CD4-positive, alpha-beta T cell (primary cell): ENCODE measurements at regions of chr14 and their contacts with region 1.

Region 1: DNA sequence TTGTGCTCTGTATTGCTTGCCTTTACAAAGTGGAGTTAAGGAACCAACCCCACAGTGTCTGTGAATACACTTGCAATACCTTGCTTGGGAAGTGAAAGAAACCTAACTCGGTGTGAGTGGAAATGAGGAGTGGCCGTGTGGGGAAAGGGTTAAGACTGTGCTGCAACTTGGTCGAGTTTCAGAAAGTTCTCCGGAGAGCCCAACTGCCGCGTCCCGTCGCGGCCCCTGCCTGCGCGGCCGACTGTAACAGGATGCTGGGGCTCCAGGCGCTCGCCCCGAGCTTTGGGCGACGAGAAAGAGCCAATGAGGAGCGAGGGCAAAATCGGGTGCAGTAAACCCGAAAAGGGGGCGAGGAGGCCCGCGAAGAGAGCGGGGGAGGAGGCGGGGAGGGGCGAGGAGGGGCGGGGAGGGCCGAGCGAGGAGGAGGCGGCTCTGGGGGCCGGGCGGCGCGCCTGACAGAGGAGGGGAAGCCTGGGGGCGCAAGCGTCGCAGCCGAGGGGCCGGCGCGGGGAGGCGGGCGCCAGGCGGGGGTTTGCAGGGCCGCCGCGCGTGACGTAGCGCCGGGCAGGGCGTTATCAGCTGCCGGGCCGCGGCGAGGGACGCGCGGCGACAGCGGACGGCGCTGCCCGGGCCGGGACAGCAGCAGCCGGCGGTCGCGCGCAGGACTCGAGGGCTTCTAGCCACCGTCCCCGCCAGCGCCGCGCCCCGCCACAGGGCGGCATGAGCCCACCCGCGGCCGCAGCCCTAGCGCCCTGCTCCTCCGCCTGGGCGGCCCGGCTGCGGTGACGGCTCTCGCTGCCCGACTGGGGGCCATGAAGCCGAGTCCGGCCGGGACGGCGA is at the start of gene DACT1:
- DNase-seq: peak; percentile 17 to 80 (median 48)
- ATAC-seq: peak; percentile 67
- H3K4me3 ChIP-seq: peak within 1 kb of the TSS; percentile 55
- H3K4me3 Mint-ChIP-seq: peak within 1 kb of the TSS; percentile 93
- H3K27ac ChIP-seq: peak within 1 kb of the TSS in 1 of 2 donors; percentile 31
- H3K27ac Mint-ChIP-seq: peak within 1 kb of the TSS; percentile 40
- H3K4me1 ChIP-seq: peaks cover 18% of the 10 kb centered on the region
- H3K4me1 Mint-ChIP-seq: peaks cover 35% of the 10 kb centered on the region
- H3K27me3 ChIP-seq: peaks cover 0 to 15% of the 10 kb centered on the region in 2 experiments
- H3K27me3 Mint-ChIP-seq: peaks cover 34% of the 10 kb centered on the region
- CTCF ChIP-seq: no peak
- total RNA-seq, gene DACT1: 1.3 TPM

Region 2: DNA sequence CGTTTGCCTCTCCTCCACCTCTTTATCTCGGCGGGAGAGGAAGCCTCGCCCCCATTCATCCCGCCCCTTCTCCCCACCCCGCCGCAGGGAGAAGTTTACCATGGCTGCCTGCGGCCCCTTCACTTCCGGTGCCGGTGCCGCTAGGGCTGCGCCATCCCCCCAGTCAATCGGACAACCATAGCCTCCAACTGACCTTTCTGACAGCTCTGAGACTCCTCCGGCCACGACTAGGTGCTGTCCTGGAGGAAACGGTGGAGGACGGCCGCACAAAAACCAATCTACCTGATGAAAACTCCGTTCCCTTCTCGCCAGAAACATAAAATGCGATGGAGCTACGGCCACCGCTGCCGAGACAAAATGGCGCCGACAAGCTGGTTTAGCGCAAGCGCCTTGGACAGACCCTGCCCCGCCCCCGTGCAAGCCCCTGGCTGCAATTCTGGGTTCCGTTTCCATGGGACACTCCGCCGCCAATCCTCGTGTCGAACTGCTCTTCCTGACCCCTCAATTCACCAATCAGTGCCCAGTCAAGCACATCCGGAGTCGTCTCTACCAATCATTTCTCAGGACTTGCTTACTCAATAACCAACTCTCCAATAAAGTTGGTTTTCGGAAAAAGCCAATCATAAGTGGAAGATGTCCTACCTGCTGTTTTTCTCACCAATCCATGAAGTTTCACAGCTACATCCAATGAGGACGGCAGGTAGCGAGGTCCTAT is 339.7 kb before region 1 on chr14:
- CTCF ChIA-PET with region 1: no interaction called
- POLR2A ChIA-PET with region 1: no interaction called
- intact Hi-C with region 1: no loop called
- DNase-seq: peak; percentile 94 to 100 (median 98)
- ATAC-seq: peak; percentile 83
- H3K4me3 ChIP-seq: peak overlapping the region; percentile 85
- H3K4me3 Mint-ChIP-seq: no peak overlapping the region
- H3K27ac ChIP-seq: peak overlapping the region; percentile 95 to 98
- H3K27ac Mint-ChIP-seq: no peak overlapping the region
- H3K4me1 ChIP-seq: peaks cover 30% of the 10 kb centered on the region
- H3K4me1 Mint-ChIP-seq: peaks cover 32% of the 10 kb centered on the region
- H3K27me3 ChIP-seq: no peaks in the 10 kb centered on the region
- H3K27me3 Mint-ChIP-seq: no peaks in the 10 kb centered on the region
- CTCF ChIP-seq: no peak

Region 3: GRCh38 chr14:58501214-58501816 is 136.3 kb before region 1 on chr14:
- CTCF ChIA-PET with region 1: no interaction called
- POLR2A ChIA-PET with region 1: interaction called, 3 read pairs
- intact Hi-C with region 1: loop called (anchors 2 to 5 kb)
- DNase-seq: peak in 5 of 14 experiments; percentile 21 to 70 (median 46)
- ATAC-seq: peak; percentile 71
- H3K4me3 ChIP-seq: no peak overlapping the region
- H3K4me3 Mint-ChIP-seq: no peak overlapping the region
- H3K27ac ChIP-seq: no peak overlapping the region
- H3K27ac Mint-ChIP-seq: no peak overlapping the region
- H3K4me1 ChIP-seq: no peaks in the 10 kb centered on the region
- H3K4me1 Mint-ChIP-seq: no peaks in the 10 kb centered on the region
- H3K27me3 ChIP-seq: no peaks in the 10 kb centered on the region
- H3K27me3 Mint-ChIP-seq: no peaks in the 10 kb centered on the region
- CTCF ChIP-seq: peak; percentile 82

Region 4: DNA sequence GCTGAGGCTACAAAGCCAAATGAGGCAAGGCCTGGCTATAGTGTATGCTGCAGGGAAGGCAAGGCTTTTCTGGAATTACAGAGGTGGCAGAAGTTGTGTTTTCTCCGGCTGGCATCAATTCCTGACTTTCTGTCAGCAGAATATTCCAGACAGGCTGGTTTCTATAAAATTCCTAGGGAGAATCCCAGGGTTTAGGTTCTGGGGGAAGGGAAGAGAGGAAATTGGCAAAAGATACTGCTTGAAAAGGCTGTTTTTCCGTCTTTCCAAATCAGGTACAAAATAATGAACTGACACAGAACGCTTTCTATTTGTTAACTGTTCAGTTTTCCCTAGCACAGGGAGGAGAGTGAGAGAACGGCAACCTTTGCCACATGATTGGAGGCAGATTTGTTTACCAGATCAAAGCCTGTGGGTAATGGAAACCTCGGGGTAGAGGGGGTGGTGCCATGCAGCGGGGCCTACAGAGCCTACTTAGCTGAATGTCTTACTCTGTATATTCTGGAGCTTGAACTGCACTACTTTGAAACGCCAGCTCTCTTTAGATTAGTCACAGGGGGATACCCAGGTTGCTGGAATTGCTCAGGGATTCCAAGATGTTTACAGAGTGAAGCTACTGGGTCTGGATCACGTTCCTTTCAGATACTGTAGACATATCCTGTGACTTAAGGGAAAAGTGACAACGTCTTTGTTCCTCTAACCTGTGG is 65.7 kb before region 1 on chr14:
- CTCF ChIA-PET with region 1: interaction called, 3 read pairs
- POLR2A ChIA-PET with region 1: interaction called, 13 read pairs
- intact Hi-C with region 1: no loop called
- DNase-seq: peak in 13 of 14 experiments; percentile 8 to 56 (median 30)
- ATAC-seq: peak; percentile 90
- H3K4me3 ChIP-seq: no peak overlapping the region
- H3K4me3 Mint-ChIP-seq: peak overlapping the region; percentile 59
- H3K27ac ChIP-seq: peak overlapping the region; percentile 35 to 57
- H3K27ac Mint-ChIP-seq: peak overlapping the region; percentile 90
- H3K4me1 ChIP-seq: peaks cover 18% of the 10 kb centered on the region
- H3K4me1 Mint-ChIP-seq: peaks cover 47% of the 10 kb centered on the region
- H3K27me3 ChIP-seq: no peaks in the 10 kb centered on the region
- H3K27me3 Mint-ChIP-seq: no peaks in the 10 kb centered on the region
- CTCF ChIP-seq: no peak

Region 5: DNA sequence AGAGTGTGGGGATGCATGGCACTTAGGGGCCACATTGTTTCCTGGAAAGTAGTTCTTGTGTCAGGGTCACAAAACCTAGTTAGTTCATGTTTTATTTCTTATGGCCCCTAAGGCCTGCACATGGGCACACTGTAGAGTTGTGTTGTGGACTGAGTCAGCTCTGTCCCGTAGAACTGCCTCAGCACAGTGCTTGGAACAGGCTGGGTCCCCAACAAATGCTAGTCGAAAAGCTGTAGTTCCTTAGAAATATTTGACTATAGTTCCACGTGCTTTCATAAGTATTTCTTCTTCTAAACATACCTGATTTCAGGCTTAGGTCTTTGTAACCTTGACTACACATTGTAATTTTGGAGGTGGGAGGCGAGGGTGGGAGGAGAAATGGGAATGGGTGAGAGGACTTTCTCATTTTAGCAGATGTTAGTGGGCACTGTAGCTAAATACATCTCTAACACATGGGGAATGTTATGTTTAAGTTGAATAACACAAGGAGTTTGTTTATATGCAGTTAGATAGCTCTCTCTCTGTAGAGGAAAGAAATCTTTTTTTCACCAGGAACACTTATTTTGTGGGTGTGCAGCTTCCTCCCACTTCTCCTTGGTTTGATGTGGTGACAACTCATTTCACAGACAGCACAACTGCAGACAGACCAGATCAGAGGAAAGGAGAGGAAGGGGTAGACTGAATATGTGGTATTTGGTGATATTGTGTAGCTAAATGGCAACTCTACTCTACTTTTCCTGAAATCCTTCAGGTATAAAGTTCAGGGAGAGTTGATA is 39.4 kb before region 1 on chr14:
- CTCF ChIA-PET with region 1: no interaction called
- POLR2A ChIA-PET with region 1: interaction called, 20 read pairs
- intact Hi-C with region 1: no loop called
- DNase-seq: peak in 7 of 14 experiments; percentile 0 to 63 (median 40)
- ATAC-seq: peak; percentile 89
- H3K4me3 ChIP-seq: no peak overlapping the region
- H3K4me3 Mint-ChIP-seq: peak overlapping the region; percentile 63
- H3K27ac ChIP-seq: no peak overlapping the region
- H3K27ac Mint-ChIP-seq: peak overlapping the region; percentile 57
- H3K4me1 ChIP-seq: peaks cover 28% of the 10 kb centered on the region
- H3K4me1 Mint-ChIP-seq: peaks cover 38% of the 10 kb centered on the region
- H3K27me3 ChIP-seq: no peaks in the 10 kb centered on the region
- H3K27me3 Mint-ChIP-seq: peaks cover 18% of the 10 kb centered on the region
- CTCF ChIP-seq: no peak

Region 6: GRCh38 chr14:59028476-59029202 is 391.0 kb after region 1 on chr14:
- CTCF ChIA-PET with region 1: no interaction called
- POLR2A ChIA-PET with region 1: no interaction called
- intact Hi-C with region 1: loop called in 1 of 2 experiments (anchors 10 kb)
- DNase-seq: peak in 5 of 14 experiments; percentile 5 to 36 (median 25)
- ATAC-seq: no peak
- H3K4me3 ChIP-seq: no peak overlapping the region
- H3K4me3 Mint-ChIP-seq: no peak overlapping the region
- H3K27ac ChIP-seq: no peak overlapping the region
- H3K27ac Mint-ChIP-seq: no peak overlapping the region
- H3K4me1 ChIP-seq: no peaks in the 10 kb centered on the region
- H3K4me1 Mint-ChIP-seq: no peaks in the 10 kb centered on the region
- H3K27me3 ChIP-seq: no peaks in the 10 kb centered on the region
- H3K27me3 Mint-ChIP-seq: peaks cover 16% of the 10 kb centered on the region
- CTCF ChIP-seq: peak; percentile 43

Region 7: DNA sequence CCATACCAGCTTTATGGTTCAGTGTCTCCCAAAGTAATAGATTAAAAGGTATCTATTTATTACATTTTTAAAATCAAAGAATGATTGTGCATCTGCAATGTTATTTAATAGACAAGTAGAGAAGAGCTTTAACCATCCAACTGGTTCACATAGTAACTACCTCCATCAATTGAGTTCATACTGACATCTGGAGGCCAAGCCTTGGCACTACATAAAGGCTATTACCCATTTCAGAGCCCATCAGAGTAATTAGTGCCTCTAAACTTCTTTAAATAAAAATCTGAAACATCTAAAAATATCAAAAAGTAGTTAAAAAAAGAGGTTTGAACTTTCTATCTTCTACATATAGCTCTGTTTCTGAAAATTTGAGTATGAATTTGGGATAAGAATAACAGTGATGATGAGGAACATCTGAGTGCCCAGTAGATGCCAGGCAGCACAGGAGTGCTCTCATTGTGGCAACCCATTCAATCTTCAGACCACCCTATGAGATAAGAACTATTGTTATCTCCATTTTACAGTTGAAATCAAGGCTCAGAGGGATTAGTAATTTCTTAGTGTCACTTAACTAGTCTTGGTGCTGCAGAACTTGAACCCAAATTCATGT is 417.9 kb after region 1 on chr14:
- CTCF ChIA-PET with region 1: no interaction called
- POLR2A ChIA-PET with region 1: no interaction called
- intact Hi-C with region 1: loop called in 1 of 2 experiments (anchors 5 kb)
- DNase-seq: peak in 8 of 14 experiments; percentile 3 to 52 (median 27)
- ATAC-seq: peak; percentile 44
- H3K4me3 ChIP-seq: no peak overlapping the region
- H3K4me3 Mint-ChIP-seq: no peak overlapping the region
- H3K27ac ChIP-seq: no peak overlapping the region
- H3K27ac Mint-ChIP-seq: no peak overlapping the region
- H3K4me1 ChIP-seq: no peaks in the 10 kb centered on the region
- H3K4me1 Mint-ChIP-seq: no peaks in the 10 kb centered on the region
- H3K27me3 ChIP-seq: no peaks in the 10 kb centered on the region
- H3K27me3 Mint-ChIP-seq: peaks cover 21% of the 10 kb centered on the region
- CTCF ChIP-seq: peak; percentile 63

Region 8: GRCh38 chr14:59464486-59465315 is 827.1 kb after region 1 on chr14:
- CTCF ChIA-PET with region 1: no interaction called
- POLR2A ChIA-PET with region 1: no interaction called
- intact Hi-C with region 1: loop called in 1 of 2 experiments (anchors 10 kb)
- DNase-seq: peak; percentile 19 to 85 (median 50)
- ATAC-seq: peak; percentile 76
- H3K4me3 ChIP-seq: peak overlapping the region; percentile 56
- H3K4me3 Mint-ChIP-seq: peak overlapping the region; percentile 94
- H3K27ac ChIP-seq: no peak overlapping the region
- H3K27ac Mint-ChIP-seq: peak overlapping the region; percentile 54
- H3K4me1 ChIP-seq: peaks cover 15% of the 10 kb centered on the region
- H3K4me1 Mint-ChIP-seq: peaks cover 8% of the 10 kb centered on the region
- H3K27me3 ChIP-seq: no peaks in the 10 kb centered on the region
- H3K27me3 Mint-ChIP-seq: peaks cover 10% of the 10 kb centered on the region
- CTCF ChIP-seq: no peak

Region 9: DNA sequence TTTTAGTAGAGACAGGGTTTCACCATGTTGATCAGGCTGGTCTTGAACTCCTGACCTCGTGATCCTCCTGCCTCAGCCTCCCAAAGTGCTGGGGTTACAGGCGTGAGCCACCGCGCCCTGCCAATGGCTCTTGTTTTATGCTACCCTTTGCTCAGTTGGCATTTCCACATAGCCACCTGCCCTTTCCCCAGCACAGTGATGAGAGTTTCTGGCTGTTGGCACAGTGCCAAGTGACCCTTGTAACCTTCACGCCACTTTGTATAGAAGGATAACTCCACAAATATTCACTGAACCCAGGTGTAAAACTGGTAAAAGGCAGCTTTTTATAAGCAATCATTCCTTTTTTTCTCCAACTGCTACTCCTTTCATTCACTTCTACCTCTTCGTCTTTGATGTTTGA is 957.5 kb after region 1 on chr14:
- CTCF ChIA-PET with region 1: no interaction called
- POLR2A ChIA-PET with region 1: no interaction called
- intact Hi-C with region 1: no loop called
- DNase-seq: no peak
- ATAC-seq: no peak
- H3K4me3 ChIP-seq: no peak overlapping the region
- H3K4me3 Mint-ChIP-seq: no peak overlapping the region
- H3K27ac ChIP-seq: no peak overlapping the region
- H3K27ac Mint-ChIP-seq: no peak overlapping the region
- H3K4me1 ChIP-seq: no peaks in the 10 kb centered on the region
- H3K4me1 Mint-ChIP-seq: no peaks in the 10 kb centered on the region
- H3K27me3 ChIP-seq: peaks cover 0 to 2% of the 10 kb centered on the region in 2 experiments
- H3K27me3 Mint-ChIP-seq: peaks cover 19% of the 10 kb centered on the region
- CTCF ChIP-seq: no peak